K562 (cell line): ENCODE measurements at regions of chr16 and their contacts with region 1.

Region 1: DNA sequence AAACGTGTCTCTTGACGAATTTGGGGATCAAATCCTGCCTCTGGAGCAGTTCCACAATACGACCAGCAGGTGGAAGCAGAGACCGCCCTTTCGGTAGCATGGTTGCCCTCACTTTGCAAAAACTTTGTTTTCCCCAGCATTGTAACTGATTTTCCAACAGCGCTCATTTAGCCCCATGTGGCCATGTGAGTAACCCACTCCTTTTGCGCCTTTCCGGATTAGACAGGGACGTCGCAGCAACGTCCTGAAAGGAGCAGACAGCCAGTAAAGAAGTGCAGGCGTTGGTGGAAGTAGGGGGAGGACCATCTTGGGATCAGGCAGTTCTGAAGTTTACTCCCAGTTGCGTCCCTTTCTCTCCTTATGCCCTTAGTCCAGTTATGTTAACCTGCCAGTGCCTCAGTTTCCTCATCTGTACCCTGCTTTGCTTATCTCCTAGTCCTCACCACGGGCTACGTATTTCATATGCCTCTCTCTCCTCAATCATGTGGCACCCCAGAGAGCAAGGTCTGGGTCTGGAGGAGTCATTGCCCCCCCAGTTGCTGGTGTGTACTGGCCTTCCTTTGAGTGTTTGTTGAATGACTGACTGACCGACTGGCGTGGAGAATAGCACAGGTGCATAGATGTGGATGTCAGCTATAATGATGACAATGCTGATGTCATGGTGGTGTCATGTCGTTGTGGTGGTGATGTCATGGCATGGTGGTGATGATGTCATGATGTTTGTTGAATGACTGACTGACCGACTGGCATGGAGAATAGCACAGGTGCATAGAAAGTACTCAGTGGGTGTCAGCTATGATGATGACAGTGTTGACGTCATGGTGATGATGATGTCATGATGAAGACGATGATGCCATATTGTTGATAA is 22.3 kb downstream of the TMEM114 start:
- DNase-seq: peak; percentile 78 to 91 (median 80)
- ATAC-seq: peak; percentile 95
- H3K4me3 ChIP-seq: no peak overlapping the region
- H3K27ac ChIP-seq: no peak overlapping the region
- H3K4me1 ChIP-seq: peaks cover 0 to 8% of the 10 kb centered on the region in 2 experiments; a peak in 2 of 5 replicates
- H3K27me3 ChIP-seq: peaks cover 9 to 29% of the 10 kb centered on the region in 2 experiments; a peak in 4 of 5 replicates
- CTCF ChIP-seq: peak; percentile 99
- EP300 ChIP-seq: 0 out of 2 replicates have a peak, but pooled peaks have one; percentile 17
- POLR2A ChIP-seq: no peak
- RAD21 ChIP-seq: peak; percentile 93 to 97

Region 2: GRCh38 chr16:8634991-8635736 is 67.2 kb after region 1 on chr16:
- CTCF ChIA-PET with region 1: interaction called, 28 read pairs
- POLR2A ChIA-PET with region 1: interaction called, 3 read pairs
- in situ Hi-C with region 1: no loop called
- intact Hi-C with region 1: loop called (anchors 1 kb)
- DNase-seq: peak; percentile 59 to 69 (median 63)
- ATAC-seq: peak; percentile 96
- H3K4me3 ChIP-seq: no peak overlapping the region
- H3K27ac ChIP-seq: no peak overlapping the region
- H3K4me1 ChIP-seq: peaks cover 3% of the 10 kb centered on the region in 2 experiments; a peak in 4 of 5 replicates
- H3K27me3 ChIP-seq: no peaks in the 10 kb centered on the region
- CTCF ChIP-seq: peak; percentile 96 to 100 (median 100)
- EP300 ChIP-seq: no peak
- POLR2A ChIP-seq: no peak
- RAD21 ChIP-seq: peak; percentile 44 to 75

Region 3: GRCh38 chr16:8655184-8655717 is 87.3 kb after region 1 on chr16:
- CTCF ChIA-PET with region 1: interaction called, 4 read pairs
- POLR2A ChIA-PET with region 1: no interaction called
- in situ Hi-C with region 1: no loop called
- intact Hi-C with region 1: loop called (anchors 5 kb)
- DNase-seq: peak in 3 of 4 experiments; percentile 17 to 37 (median 22)
- ATAC-seq: peak; percentile 82
- H3K4me3 ChIP-seq: no peak overlapping the region
- H3K27ac ChIP-seq: no peak overlapping the region
- H3K4me1 ChIP-seq: no peaks in the 10 kb centered on the region; a peak in 1 of 5 replicates
- H3K27me3 ChIP-seq: peaks cover 4 to 18% of the 10 kb centered on the region in 2 experiments; a peak in 2 of 5 replicates
- CTCF ChIP-seq: peak; percentile 23 to 39 (median 26); a peak in 1 of 6 replicates
- EP300 ChIP-seq: no peak
- POLR2A ChIP-seq: no peak
- RAD21 ChIP-seq: peak in 1 of 2 experiments; percentile 25; a peak in 2 of 4 replicates

Region 4: GRCh38 chr16:8797364-8798173 is 229.6 kb after region 1 on chr16 and contains the starts of genes PMM2 and TMEM186:
- CTCF ChIA-PET with region 1: no interaction called
- POLR2A ChIA-PET with region 1: no interaction called
- in situ Hi-C with region 1: no loop called
- intact Hi-C with region 1: loop called (anchors 2 kb)
- DNase-seq: peak; percentile 95 to 98 (median 96)
- ATAC-seq: peak; percentile 99
- H3K4me3 ChIP-seq: peak within 1 kb of the TSS; percentile 69
- H3K27ac ChIP-seq: peak within 1 kb of the TSS; percentile 88
- H3K4me1 ChIP-seq: peaks cover 12 to 13% of the 10 kb centered on the region in 2 experiments; a peak in 4 of 5 replicates
- H3K27me3 ChIP-seq: no peaks in the 10 kb centered on the region
- CTCF ChIP-seq: no peak
- EP300 ChIP-seq: no peak
- POLR2A ChIP-seq: peak; percentile 92
- RAD21 ChIP-seq: no peak
- polyA plus RNA-seq, gene PMM2: 5.6 to 7.8 TPM
- polyA plus RNA-seq, gene TMEM186: 27.3 to 33.4 TPM

Region 5: DNA sequence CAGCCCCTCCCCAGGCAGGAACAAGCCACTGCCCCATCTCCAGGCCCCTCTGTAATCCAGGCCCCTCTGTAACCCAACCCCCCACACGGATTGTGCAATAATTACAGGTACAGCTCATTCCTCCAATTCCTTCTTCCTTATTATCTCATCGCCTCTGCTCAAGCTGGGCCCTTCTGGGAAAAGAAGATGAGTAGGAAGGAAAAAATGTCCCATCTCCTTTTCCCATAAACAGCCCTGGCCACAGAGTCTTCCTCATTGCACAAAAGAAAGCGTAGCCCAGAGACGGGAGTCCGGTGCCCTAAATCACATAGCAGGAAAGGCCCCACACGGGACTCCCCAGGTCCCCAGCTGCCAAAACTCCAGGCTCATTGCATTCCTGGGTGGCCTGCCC is 310.5 kb after region 1 on chr16:
- CTCF ChIA-PET with region 1: interaction called, 19 read pairs
- POLR2A ChIA-PET with region 1: no interaction called
- in situ Hi-C with region 1: loop called (anchors 5 kb)
- intact Hi-C with region 1: loop called (anchors 5 kb)
- DNase-seq: no peak
- ATAC-seq: no peak
- H3K4me3 ChIP-seq: no peak overlapping the region
- H3K27ac ChIP-seq: no peak overlapping the region
- H3K4me1 ChIP-seq: peaks cover 0 to 6% of the 10 kb centered on the region in 2 experiments; a peak in 2 of 5 replicates
- H3K27me3 ChIP-seq: peaks cover 0 to 12% of the 10 kb centered on the region in 2 experiments; a peak in 3 of 5 replicates
- CTCF ChIP-seq: no peak
- EP300 ChIP-seq: no peak
- POLR2A ChIP-seq: no peak
- RAD21 ChIP-seq: no peak

Region 6: DNA sequence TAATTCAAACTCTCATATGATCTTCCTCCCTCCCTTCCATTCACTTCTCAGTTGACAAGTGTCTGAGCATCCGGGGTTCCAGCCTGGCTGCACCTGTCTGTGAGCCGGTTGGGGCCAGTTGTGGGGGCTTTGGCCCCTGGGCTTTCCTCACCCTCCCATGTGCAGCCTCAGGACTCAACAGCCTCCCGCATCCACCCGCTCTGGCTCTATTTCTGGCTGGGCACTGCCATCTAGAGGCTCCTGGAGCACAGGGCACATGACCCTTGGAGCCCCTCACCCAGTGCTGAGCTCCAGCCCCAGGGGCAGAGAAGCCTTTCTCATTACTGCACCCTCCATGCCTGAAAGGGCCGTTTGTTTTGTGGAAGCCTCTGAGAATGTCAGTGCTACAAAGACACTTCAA is 566.8 kb after region 1 on chr16:
- CTCF ChIA-PET with region 1: interaction called, 3 read pairs
- POLR2A ChIA-PET with region 1: no interaction called
- in situ Hi-C with region 1: no loop called
- intact Hi-C with region 1: loop called (anchors 10 kb)
- DNase-seq: peak in 3 of 4 experiments; percentile 15 to 54 (median 53)
- ATAC-seq: peak; percentile 82
- H3K4me3 ChIP-seq: no peak overlapping the region
- H3K27ac ChIP-seq: no peak overlapping the region
- H3K4me1 ChIP-seq: peaks cover 3 to 8% of the 10 kb centered on the region in 2 experiments; a peak in 3 of 5 replicates
- H3K27me3 ChIP-seq: no peaks in the 10 kb centered on the region
- CTCF ChIP-seq: peak; percentile 61 to 78 (median 71)
- EP300 ChIP-seq: no peak
- POLR2A ChIP-seq: no peak
- RAD21 ChIP-seq: peak in 1 of 2 experiments; percentile 63; a peak in 2 of 4 replicates

Region 7: DNA sequence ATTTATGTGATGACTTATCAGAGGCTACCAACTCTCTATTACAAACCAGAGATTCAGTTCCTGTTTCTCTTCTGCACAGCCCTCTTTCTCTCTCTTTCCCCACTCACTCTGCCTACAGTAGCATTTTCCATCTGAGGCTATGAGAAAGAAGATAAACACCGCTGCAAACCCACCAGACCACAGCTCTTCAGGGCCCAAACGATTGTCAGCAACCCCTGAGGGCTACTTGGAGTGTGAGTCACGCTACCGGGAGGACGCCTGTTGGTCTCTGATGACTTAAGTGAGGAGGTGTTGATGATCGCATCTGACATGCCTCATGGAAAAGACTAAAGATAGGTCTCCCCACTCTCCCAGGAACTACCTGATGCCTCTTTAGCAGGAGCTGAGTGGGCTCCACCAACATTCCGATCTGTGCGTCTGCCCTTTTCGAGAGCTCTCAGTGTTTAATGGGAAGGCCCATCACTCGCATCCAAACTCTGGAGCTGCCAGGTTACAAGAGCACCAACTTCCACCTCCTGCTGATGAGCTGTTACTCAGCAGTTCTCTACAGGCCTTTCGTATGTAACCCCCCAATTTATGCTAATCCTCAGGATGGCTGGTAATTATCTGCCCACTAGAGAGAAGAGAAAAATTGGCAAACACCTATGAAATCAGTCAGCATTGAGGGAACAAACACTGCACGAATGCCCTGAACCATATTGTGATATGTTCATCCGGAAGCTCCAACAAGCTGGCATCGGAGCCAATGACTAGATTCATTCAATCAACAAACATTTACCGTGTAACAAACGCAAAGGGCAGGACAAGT is 1605.1 kb after region 1 on chr16:
- CTCF ChIA-PET with region 1: no interaction called
- POLR2A ChIA-PET with region 1: no interaction called
- in situ Hi-C with region 1: loop called (anchors 25 kb)
- intact Hi-C with region 1: no loop called
- DNase-seq: peak in 2 of 4 experiments; percentile 30 to 34
- ATAC-seq: no peak
- H3K4me3 ChIP-seq: no peak overlapping the region
- H3K27ac ChIP-seq: no peak overlapping the region
- H3K4me1 ChIP-seq: no peaks in the 10 kb centered on the region
- H3K27me3 ChIP-seq: peaks cover 0 to 5% of the 10 kb centered on the region in 2 experiments; a peak in 1 of 5 replicates
- CTCF ChIP-seq: no peak
- EP300 ChIP-seq: no peak
- POLR2A ChIP-seq: no peak
- RAD21 ChIP-seq: no peak